Left ventricle myocardium superior (tissue), 1 donor: ENCODE measurements at regions of chr9 and their contacts with region 1.

Region 1: GRCh38 chr9:19028835-19029451 is 4.1 kb downstream of the SAXO1 start:
- DNase-seq: peak; percentile 46
- ATAC-seq: peak; percentile 68

Region 2: DNA sequence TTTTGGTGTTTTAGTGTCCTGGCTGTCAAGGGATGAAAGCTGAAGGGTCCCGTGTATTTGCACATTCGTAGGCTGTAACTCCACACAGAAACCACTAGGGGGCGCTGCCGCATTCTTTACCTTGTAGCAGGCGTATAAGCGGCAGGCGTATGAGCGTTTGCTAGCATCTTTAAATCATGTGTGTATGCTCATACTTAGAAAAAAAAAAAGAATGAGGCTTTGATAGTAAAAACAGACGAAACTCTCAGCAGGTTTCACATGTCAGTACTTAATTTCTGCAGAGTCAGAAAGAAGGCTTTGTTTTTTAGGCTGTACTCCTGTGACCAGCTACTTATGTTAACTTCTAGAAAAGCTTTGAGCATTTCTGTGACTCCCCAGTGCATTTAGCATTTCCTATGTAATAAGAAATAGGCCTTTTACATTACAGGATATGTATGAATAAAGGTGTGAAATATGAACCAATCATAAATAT is 773.7 kb before region 1 on chr9:
- intact Hi-C with region 1: loop called (anchors 5 kb)
- DNase-seq: peak; percentile 78
- ATAC-seq: peak; percentile 85

Region 3: GRCh38 chr9:18947772-18948391 is 81.1 kb before region 1 on chr9:
- intact Hi-C with region 1: no loop called
- DNase-seq: no peak
- ATAC-seq: no peak

Region 4: GRCh38 chr9:18976709-18977531 is 52.0 kb before region 1 on chr9:
- intact Hi-C with region 1: no loop called
- DNase-seq: no peak
- ATAC-seq: no peak